ENCODE measurements at regions of chr22 and their contacts with region 1.

Region 1: GRCh38 chr22:43213051-43213450 is 26.1 kb upstream of the TTLL12 start:
- DNase-seq: peak; percentile 45

Region 2: GRCh38 chr22:43187171-43188099 is 25.6 kb before region 1 on chr22:
- CTCF ChIA-PET with region 1: no interaction called
- POLR2A ChIA-PET with region 1: interaction called, 25 read pairs
- DNase-seq: peak; percentile 97